ENCODE measurements at regions of chr13 and their contacts with region 1.

Region 1: GRCh38 chr13:36420437-36420891 is 11.8 kb upstream of the CCNA1 start:
- DNase-seq: peak in 4 of 5 donors; percentile 48 to 59 (median 56)
- ATAC-seq: peak in 3 of 4 donors; percentile 74 to 84 (median 84)
- H3K4me3 ChIP-seq: no peak overlapping the region
- H3K27ac ChIP-seq: no peak overlapping the region
- H3K4me1 ChIP-seq: peaks cover 0 to 15% (median 0%) of the 10 kb centered on the region in 12 donors
- H3K27me3 ChIP-seq: peaks cover 0 to 13% (median 0%) of the 10 kb centered on the region in 9 donors
- CTCF ChIP-seq: peak; percentile 73 to 93 (median 84)
- POLR2A ChIP-seq: no peak

Region 2: DNA sequence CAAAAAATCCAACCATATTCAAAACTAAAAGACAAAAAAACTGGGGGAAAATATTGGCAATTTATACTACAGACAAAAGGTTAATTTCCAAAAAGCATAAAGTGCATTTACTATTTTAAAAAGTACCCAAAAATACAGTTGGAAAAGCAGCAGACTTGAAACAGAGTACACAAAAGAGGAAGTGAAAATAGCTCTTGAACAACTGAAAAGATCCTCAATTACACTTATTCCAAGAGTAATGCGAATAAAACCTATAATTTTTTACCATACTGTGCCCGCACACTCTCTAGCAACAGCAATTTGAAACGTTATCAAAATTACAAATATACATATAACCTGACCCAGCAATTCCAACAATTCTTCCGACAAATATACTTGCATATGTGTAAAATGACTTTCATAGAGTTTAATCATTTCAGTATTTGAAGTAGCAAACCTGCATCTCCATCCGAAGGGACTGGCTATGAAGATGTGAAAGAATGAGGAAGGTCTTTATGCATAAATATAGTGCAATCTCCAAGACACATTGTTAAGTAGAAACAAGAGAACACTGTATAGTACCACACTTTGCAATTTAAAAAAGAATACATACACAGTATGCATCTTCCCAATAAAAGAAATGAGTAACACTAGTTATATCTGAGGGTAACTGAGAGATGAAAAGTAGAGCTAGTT is 553.3 kb after region 1 on chr13:
- intact Hi-C with region 1: loop called in 2 of 10 experiments (anchors 10 kb)
- DNase-seq: no peak
- ATAC-seq: no peak
- H3K4me3 ChIP-seq: no peak overlapping the region
- H3K27ac ChIP-seq: no peak overlapping the region
- H3K4me1 ChIP-seq: no peaks in the 10 kb centered on the region
- H3K27me3 ChIP-seq: no peaks in the 10 kb centered on the region
- CTCF ChIP-seq: no peak
- POLR2A ChIP-seq: no peak

Region 3: DNA sequence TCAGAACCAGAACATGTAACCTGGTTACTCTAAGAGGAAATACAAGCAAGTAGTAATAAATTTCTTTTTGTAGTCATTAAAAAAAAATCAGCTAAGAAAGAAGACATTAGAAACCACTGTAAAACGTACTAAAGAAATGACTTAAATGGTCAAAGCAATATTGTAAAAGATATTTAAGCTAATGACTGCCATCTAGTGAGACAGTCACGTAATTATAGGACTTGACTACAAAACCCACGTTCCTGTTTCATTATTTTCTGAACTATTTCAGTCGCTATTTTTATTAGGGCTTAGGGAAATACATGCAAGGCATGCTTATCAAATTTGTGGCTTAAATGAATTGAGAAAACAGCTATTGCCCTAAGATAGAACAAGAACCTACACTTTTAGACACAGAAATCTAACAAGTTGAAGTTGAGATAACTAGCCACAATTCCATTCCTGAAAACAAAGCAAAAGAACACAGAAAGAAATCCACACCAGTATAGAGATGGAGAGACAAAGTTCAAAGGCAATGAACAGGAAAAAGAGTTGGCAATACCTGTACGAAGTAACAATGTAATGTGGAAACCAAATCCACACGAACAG is 560.8 kb after region 1 on chr13:
- intact Hi-C with region 1: loop called in 3 of 10 experiments (anchors 10 kb)
- DNase-seq: no peak
- ATAC-seq: no peak
- H3K4me3 ChIP-seq: no peak overlapping the region
- H3K27ac ChIP-seq: no peak overlapping the region
- H3K4me1 ChIP-seq: peaks cover 0 to 5% (median 0%) of the 10 kb centered on the region in 12 donors
- H3K27me3 ChIP-seq: no peaks in the 10 kb centered on the region
- CTCF ChIP-seq: peak; percentile 26 to 68 (median 51)
- POLR2A ChIP-seq: no peak

Measured in heart left ventricle (tissue), 16 donors.